B cell (primary cell): ENCODE measurements at regions of chr4 and their contacts with region 1.

Region 1: GRCh38 chr4:183261953-183262775 is 57.9 kb downstream of the CLDN22 start:
- DNase-seq: peak; percentile 48
- ATAC-seq: peak; percentile 57
- H3K4me3 ChIP-seq: no peak overlapping the region
- H3K4me3 Mint-ChIP-seq: no peak overlapping the region
- H3K27ac ChIP-seq: no peak overlapping the region
- H3K27ac Mint-ChIP-seq: no peak overlapping the region
- H3K4me1 ChIP-seq: no peaks in the 10 kb centered on the region
- H3K4me1 Mint-ChIP-seq: no peaks in the 10 kb centered on the region
- H3K27me3 ChIP-seq: no peaks in the 10 kb centered on the region
- H3K27me3 Mint-ChIP-seq: peaks cover 13% of the 10 kb centered on the region
- CTCF ChIP-seq: peak; percentile 98

Region 2: GRCh38 chr4:182478475-182478874 is 783.7 kb before region 1 on chr4:
- CTCF ChIA-PET with region 1: no interaction called
- POLR2A ChIA-PET with region 1: no interaction called
- intact Hi-C with region 1: loop called (anchors 2 kb)
- DNase-seq: peak; percentile 33
- ATAC-seq: no peak
- H3K4me3 ChIP-seq: no peak overlapping the region
- H3K4me3 Mint-ChIP-seq: no peak overlapping the region
- H3K27ac ChIP-seq: no peak overlapping the region
- H3K27ac Mint-ChIP-seq: no peak overlapping the region
- H3K4me1 ChIP-seq: no peaks in the 10 kb centered on the region
- H3K4me1 Mint-ChIP-seq: no peaks in the 10 kb centered on the region
- H3K27me3 ChIP-seq: peaks cover 0 to 5% (median 0%) of the 10 kb centered on the region in 4 experiments
- H3K27me3 Mint-ChIP-seq: peaks cover 15% of the 10 kb centered on the region
- CTCF ChIP-seq: peak; percentile 87

Region 3: GRCh38 chr4:182938205-182938645 is 323.9 kb before region 1 on chr4:
- CTCF ChIA-PET with region 1: interaction called, 35 read pairs
- POLR2A ChIA-PET with region 1: no interaction called
- intact Hi-C with region 1: loop called (anchors 1 kb)
- DNase-seq: peak; percentile 65
- ATAC-seq: peak; percentile 92
- H3K4me3 ChIP-seq: no peak overlapping the region
- H3K4me3 Mint-ChIP-seq: no peak overlapping the region
- H3K27ac ChIP-seq: no peak overlapping the region
- H3K27ac Mint-ChIP-seq: no peak overlapping the region
- H3K4me1 ChIP-seq: no peaks in the 10 kb centered on the region
- H3K4me1 Mint-ChIP-seq: peaks cover 3% of the 10 kb centered on the region
- H3K27me3 ChIP-seq: peaks cover 0 to 4% (median 0%) of the 10 kb centered on the region in 4 experiments
- H3K27me3 Mint-ChIP-seq: peaks cover 20% of the 10 kb centered on the region
- CTCF ChIP-seq: peak; percentile 93

Region 4: GRCh38 chr4:183074296-183074990 is 187.7 kb before region 1 on chr4:
- CTCF ChIA-PET with region 1: interaction called, 27 read pairs
- POLR2A ChIA-PET with region 1: no interaction called
- intact Hi-C with region 1: no loop called
- DNase-seq: no peak
- ATAC-seq: no peak
- H3K4me3 ChIP-seq: no peak overlapping the region
- H3K4me3 Mint-ChIP-seq: no peak overlapping the region
- H3K27ac ChIP-seq: no peak overlapping the region
- H3K27ac Mint-ChIP-seq: no peak overlapping the region
- H3K4me1 ChIP-seq: no peaks in the 10 kb centered on the region
- H3K4me1 Mint-ChIP-seq: no peaks in the 10 kb centered on the region
- H3K27me3 ChIP-seq: no peaks in the 10 kb centered on the region
- H3K27me3 Mint-ChIP-seq: peaks cover 17% of the 10 kb centered on the region
- CTCF ChIP-seq: no peak

Region 5: GRCh38 chr4:183249857-183250256 is 12.3 kb before region 1 on chr4:
- CTCF ChIA-PET with region 1: interaction called, 13 read pairs
- POLR2A ChIA-PET with region 1: no interaction called
- intact Hi-C with region 1: no loop called
- DNase-seq: no peak
- ATAC-seq: no peak
- H3K4me3 ChIP-seq: no peak overlapping the region
- H3K4me3 Mint-ChIP-seq: no peak overlapping the region
- H3K27ac ChIP-seq: no peak overlapping the region
- H3K27ac Mint-ChIP-seq: no peak overlapping the region
- H3K4me1 ChIP-seq: no peaks in the 10 kb centered on the region
- H3K4me1 Mint-ChIP-seq: no peaks in the 10 kb centered on the region
- H3K27me3 ChIP-seq: no peaks in the 10 kb centered on the region
- H3K27me3 Mint-ChIP-seq: no peaks in the 10 kb centered on the region
- CTCF ChIP-seq: no peak

Region 6: GRCh38 chr4:183272384-183272783 is 10.2 kb after region 1 on chr4:
- CTCF ChIA-PET with region 1: interaction called, 17 read pairs
- POLR2A ChIA-PET with region 1: no interaction called
- intact Hi-C with region 1: no loop called
- DNase-seq: no peak
- ATAC-seq: no peak
- H3K4me3 ChIP-seq: no peak overlapping the region
- H3K4me3 Mint-ChIP-seq: no peak overlapping the region
- H3K27ac ChIP-seq: no peak overlapping the region
- H3K27ac Mint-ChIP-seq: no peak overlapping the region
- H3K4me1 ChIP-seq: no peaks in the 10 kb centered on the region
- H3K4me1 Mint-ChIP-seq: no peaks in the 10 kb centered on the region
- H3K27me3 ChIP-seq: no peaks in the 10 kb centered on the region
- H3K27me3 Mint-ChIP-seq: peaks cover 9% of the 10 kb centered on the region
- CTCF ChIP-seq: no peak